Naive thymus-derived CD4-positive, alpha-beta T cell (primary cell): ENCODE measurements at regions of chr4 and their contacts with region 1.

Region 1: GRCh38 chr4:931960-932712 is at the starts of genes GAK and TMEM175:
- DNase-seq: peak; percentile 93 to 99 (median 98)
- ATAC-seq: peak; percentile 95
- H3K4me3 ChIP-seq: peak within 1 kb of the TSS; percentile 83
- H3K4me3 Mint-ChIP-seq: peak within 1 kb of the TSS; percentile 89 to 99 (median 95)
- H3K27ac ChIP-seq: peak within 1 kb of the TSS; percentile 99
- H3K27ac Mint-ChIP-seq: peak within 1 kb of the TSS; percentile 92 to 97 (median 96)
- H3K4me1 ChIP-seq: peaks cover 24 to 35% of the 10 kb centered on the region in 2 donors
- H3K4me1 Mint-ChIP-seq: peaks cover 35 to 59% (median 48%) of the 10 kb centered on the region in 7 donors
- H3K27me3 ChIP-seq: no peaks in the 10 kb centered on the region
- H3K27me3 Mint-ChIP-seq: no peaks in the 10 kb centered on the region
- total RNA-seq, gene GAK: 167 to 206 (median 174) TPM
- total RNA-seq, gene TMEM175: 28.9 to 69.9 (median 64.9) TPM

Region 2: GRCh38 chr4:273312-274017 is 658.7 kb before region 1 on chr4:
- CTCF ChIA-PET with region 1: no interaction called
- POLR2A ChIA-PET with region 1: no interaction called
- intact Hi-C with region 1: no loop called
- DNase-seq: no peak
- ATAC-seq: no peak
- H3K4me3 ChIP-seq: no peak overlapping the region
- H3K4me3 Mint-ChIP-seq: no peak overlapping the region
- H3K27ac ChIP-seq: no peak overlapping the region
- H3K27ac Mint-ChIP-seq: no peak overlapping the region
- H3K4me1 ChIP-seq: no peaks in the 10 kb centered on the region
- H3K4me1 Mint-ChIP-seq: no peaks in the 10 kb centered on the region
- H3K27me3 ChIP-seq: no peaks in the 10 kb centered on the region
- H3K27me3 Mint-ChIP-seq: no peaks in the 10 kb centered on the region

Region 3: DNA sequence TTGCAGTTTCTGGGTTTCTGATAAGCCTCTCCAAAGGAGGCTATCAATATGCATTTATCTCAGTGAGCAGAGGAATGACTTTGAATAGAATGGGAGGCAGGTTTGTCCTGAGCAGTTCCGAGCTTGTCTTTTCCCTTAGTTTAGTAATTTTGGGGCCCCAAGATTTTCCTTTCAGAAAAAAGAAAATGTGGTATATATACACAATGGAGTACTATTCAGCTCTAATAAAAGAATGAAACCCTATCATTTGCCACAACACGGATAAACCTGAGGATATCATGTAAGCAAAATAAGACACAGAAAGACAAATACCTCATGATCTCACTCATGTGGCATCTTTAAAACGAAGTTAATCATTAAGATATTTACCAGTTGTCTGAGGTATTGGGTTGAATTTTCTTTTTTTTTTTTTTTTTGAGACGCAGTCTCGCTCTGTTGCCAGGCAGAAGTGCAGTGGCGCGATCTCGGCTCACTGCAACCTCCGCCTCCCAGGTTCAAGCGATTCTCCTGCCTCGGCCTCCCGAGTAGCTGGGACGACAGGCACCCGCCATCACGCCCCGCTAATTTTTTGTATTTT is 433.7 kb before region 1 on chr4:
- CTCF ChIA-PET with region 1: no interaction called
- POLR2A ChIA-PET with region 1: no interaction called
- intact Hi-C with region 1: loop called in 1 of 2 experiments (anchors 1 kb)
- DNase-seq: no peak
- ATAC-seq: peak; percentile 60
- H3K4me3 ChIP-seq: peak overlapping the region; percentile 96
- H3K4me3 Mint-ChIP-seq: peak overlapping the region; percentile 90 to 97 (median 94)
- H3K27ac ChIP-seq: peak overlapping the region; percentile 94
- H3K27ac Mint-ChIP-seq: peak overlapping the region; percentile 91 to 98 (median 97)
- H3K4me1 ChIP-seq: peaks cover 13 to 16% of the 10 kb centered on the region in 2 donors
- H3K4me1 Mint-ChIP-seq: peaks cover 19 to 53% (median 44%) of the 10 kb centered on the region in 7 donors
- H3K27me3 ChIP-seq: no peaks in the 10 kb centered on the region
- H3K27me3 Mint-ChIP-seq: no peaks in the 10 kb centered on the region

Region 4: DNA sequence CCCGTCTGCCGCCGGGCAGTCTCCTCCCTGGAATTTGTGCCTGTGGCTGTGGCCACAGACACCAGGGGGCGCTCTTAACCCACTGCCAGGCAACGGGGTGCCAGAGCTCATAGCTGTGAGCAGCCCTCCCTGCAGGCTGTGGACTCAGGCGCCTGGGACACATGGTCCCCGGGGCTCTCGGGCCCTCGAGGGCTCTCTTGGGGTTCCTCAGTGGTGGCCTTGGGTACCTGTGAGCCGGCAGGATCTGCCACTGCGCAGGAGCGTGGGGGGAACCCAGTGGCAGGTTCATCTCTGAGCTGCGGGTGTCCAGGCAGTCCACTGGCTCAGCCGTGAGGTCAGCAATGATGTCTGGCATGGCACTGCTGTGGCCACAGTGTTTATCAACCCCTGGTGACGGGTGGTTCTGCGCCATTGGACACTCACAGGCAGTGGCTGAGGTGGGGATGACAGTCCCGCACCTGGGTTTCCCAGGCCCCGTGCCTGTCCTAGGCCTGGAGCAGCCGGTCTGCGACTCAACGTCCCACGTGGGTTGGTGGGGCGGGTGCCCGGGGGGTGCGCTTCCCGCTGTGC is 189.3 kb before region 1 on chr4:
- CTCF ChIA-PET with region 1: no interaction called
- POLR2A ChIA-PET with region 1: no interaction called
- intact Hi-C with region 1: loop called in 1 of 2 experiments (anchors 2 kb)
- DNase-seq: peak; percentile 47 to 80 (median 69)
- ATAC-seq: peak; percentile 93
- H3K4me3 ChIP-seq: no peak overlapping the region
- H3K4me3 Mint-ChIP-seq: no peak overlapping the region
- H3K27ac ChIP-seq: no peak overlapping the region
- H3K27ac Mint-ChIP-seq: peak overlapping the region in 1 of 9 donors; percentile 41
- H3K4me1 ChIP-seq: no peaks in the 10 kb centered on the region
- H3K4me1 Mint-ChIP-seq: peaks cover 0 to 6% (median 2%) of the 10 kb centered on the region in 7 donors
- H3K27me3 ChIP-seq: no peaks in the 10 kb centered on the region
- H3K27me3 Mint-ChIP-seq: no peaks in the 10 kb centered on the region

Region 5: DNA sequence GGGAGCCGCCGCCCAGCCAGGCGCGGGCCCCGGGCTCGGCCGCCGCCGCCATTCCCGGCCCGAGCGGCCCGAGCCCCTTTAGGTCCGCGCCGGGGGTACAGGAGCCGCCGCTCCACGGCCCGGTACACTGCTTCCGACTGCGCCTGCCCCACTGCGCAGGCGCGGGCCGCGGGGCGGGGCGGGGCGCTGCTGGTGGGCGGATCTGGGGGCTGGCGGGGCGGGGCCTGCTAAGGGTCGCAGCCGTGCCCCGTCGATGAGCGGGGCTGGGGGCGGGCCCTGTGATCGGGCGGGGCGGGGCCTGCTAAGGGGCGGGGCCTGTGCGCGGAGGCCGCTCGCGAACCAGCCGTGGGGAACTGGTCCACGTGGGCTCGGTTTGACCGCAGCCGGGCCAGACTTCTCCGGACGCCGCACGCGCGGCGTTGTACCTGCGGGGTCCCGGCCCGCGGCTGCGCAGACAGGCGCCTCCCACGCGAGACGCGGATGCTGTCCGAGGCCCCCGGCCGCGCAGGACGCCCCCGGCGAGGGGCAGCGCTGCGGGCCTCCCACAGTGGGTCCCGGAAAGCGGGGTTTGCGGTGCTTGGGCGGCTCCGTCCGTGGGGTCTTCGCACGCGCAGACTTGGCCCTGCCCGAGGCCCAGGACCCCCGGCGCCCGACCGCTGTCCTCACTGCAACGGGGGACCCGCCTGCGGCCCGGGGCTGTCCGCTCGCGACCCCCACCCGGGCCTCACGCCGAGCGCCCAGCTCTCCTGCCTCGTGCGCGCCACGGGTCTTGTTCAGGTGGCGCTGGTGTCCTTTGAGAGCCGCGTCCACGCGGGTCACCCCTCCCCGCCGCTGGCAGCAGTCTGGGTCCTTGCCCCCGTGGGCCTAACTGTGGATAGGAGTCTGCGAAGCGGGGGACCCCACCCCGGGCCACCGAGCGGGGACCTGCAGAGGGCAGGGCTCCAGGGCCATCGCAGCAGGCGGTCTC is 41.6 kb after region 1 on chr4 and contains the start of gene DGKQ:
- CTCF ChIA-PET with region 1: no interaction called
- POLR2A ChIA-PET with region 1: interaction called, 3 read pairs
- intact Hi-C with region 1: loop called (anchors 1 kb)
- DNase-seq: peak; percentile 68 to 93 (median 83)
- ATAC-seq: peak; percentile 96
- H3K4me3 ChIP-seq: peak within 1 kb of the TSS; percentile 56
- H3K4me3 Mint-ChIP-seq: peak within 1 kb of the TSS; percentile 19 to 75 (median 56)
- H3K27ac ChIP-seq: peak within 1 kb of the TSS; percentile 72
- H3K27ac Mint-ChIP-seq: no peak within 1 kb of the TSS
- H3K4me1 ChIP-seq: peaks cover 13 to 26% of the 10 kb centered on the region in 2 donors
- H3K4me1 Mint-ChIP-seq: peaks cover 0 to 17% (median 10%) of the 10 kb centered on the region in 7 donors
- H3K27me3 ChIP-seq: no peaks in the 10 kb centered on the region
- H3K27me3 Mint-ChIP-seq: no peaks in the 10 kb centered on the region
- total RNA-seq, gene DGKQ: 14.9 to 28.0 (median 22.7) TPM

Region 6: DNA sequence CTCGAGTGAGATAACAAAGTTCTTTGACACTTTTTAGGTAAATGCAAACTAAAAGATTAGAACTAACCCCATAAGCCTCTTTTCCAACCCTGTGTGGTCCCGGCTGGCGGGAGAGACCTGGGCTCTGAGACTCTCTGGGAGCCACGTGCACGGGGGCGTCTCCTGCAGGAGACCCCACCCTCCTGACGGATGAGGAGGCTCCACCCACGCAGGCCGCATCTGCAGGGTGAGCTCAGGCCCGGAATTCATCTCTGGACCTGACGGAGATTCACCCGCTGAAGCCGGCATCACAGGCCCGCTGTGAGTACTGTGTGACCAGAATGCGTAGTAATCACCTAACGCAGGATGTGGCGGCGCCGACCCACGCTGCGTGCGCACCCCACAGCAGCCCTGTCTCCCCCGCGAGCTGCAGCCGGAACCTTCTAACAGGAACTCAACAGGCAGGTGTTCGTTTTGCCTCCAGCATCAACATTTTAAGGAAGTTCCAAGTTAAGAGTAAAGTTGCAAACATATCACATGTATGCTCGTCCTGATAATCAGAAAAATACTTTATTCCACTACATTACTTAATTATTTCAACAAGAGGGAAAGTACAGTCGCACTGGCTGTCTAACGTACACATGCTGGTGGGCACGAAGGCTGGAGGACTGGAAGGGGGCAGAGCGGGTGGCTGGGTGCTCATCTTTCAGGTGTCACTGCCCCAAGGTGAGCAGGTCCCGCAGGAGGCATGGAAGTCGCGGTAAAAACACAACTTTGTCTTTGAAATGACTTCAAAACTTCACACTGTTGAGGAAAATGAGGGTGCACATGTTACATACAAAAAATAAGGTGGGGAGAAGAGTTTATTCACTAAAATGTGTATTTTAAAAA is 123.8 kb after region 1 on chr4:
- CTCF ChIA-PET with region 1: no interaction called
- POLR2A ChIA-PET with region 1: no interaction called
- intact Hi-C with region 1: loop called in 1 of 2 experiments (anchors 1 kb)
- DNase-seq: peak; percentile 65 to 93 (median 91)
- ATAC-seq: peak; percentile 96
- H3K4me3 ChIP-seq: peak overlapping the region; percentile 74
- H3K4me3 Mint-ChIP-seq: peak overlapping the region; percentile 74 to 89 (median 85)
- H3K27ac ChIP-seq: peak overlapping the region; percentile 67
- H3K27ac Mint-ChIP-seq: peak overlapping the region; percentile 87 to 98 (median 95)
- H3K4me1 ChIP-seq: peaks cover 13 to 14% of the 10 kb centered on the region in 2 donors
- H3K4me1 Mint-ChIP-seq: peaks cover 8 to 17% (median 10%) of the 10 kb centered on the region in 7 donors
- H3K27me3 ChIP-seq: no peaks in the 10 kb centered on the region
- H3K27me3 Mint-ChIP-seq: peaks cover 0 to 17% (median 0%) of the 10 kb centered on the region in 5 donors